ENCODE measurements at regions of chr10 and their contacts with region 1.

Region 1: DNA sequence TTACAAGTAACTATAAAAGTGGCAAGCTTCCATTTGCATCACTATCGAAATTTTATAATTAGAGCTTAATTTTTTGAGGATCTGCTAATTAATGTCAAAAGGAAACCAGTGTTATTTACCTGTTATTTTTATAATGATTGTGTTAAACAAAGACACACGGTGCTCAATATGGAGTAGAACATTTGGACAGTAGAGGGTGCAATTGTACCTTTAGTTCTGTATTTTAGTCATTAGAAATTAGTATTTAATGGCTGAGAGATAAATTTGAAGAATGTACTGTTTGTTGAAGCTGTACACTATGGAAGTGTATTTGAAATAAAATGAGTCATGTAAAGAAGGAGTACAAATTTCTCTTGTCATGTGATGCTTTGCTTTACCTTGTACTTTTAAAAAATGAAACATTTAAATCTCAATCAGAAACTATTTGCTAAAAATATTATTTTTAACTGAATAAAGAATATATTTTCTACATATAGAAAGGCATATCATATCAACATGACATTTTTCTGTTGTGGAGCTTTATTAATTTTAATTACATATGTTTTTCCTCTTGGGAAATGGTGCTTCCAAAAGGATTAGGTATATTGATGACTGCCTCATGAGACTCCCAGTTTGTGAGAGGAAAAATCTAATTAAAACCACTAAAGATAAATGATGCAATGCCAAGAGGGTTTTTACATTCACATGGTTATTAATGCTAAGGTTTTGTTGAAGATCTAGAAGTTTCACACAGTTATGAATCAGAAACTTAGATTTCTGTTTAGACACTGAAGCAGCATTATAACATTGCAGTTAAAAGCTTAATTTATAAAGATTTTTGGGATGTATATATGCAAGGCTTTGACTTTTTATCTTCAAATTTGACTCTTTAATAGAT is 10.4 kb upstream of the PRKG1 start:
- DNase-seq: peak; percentile 23
- H3K4me3 ChIP-seq: no peak overlapping the region
- CTCF ChIP-seq: peak; percentile 45

Region 2: DNA sequence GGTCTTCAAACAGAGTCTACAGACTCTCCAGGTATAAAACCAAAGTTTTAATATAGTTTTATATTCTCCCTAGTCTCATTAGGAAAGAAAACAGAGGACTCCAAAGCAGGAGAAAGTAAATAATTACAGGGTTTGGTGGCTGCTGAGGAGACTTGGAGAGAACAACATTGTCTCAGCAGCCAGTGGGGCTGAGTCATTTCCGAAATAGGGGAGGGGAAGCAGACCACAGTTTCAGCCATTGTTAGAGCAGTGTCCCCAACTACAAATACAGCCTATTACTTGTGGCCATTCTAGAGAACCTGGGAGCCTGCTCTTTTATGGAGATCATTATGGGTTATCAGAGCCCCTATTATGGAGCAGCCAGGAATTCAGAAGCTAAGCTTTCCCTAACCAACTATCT is 134.2 kb before region 1 on chr10:
- CTCF ChIA-PET with region 1: no interaction called
- POLR2A ChIA-PET with region 1: no interaction called
- DNase-seq: no peak
- H3K4me3 ChIP-seq: no peak overlapping the region
- CTCF ChIP-seq: no peak

Region 3: DNA sequence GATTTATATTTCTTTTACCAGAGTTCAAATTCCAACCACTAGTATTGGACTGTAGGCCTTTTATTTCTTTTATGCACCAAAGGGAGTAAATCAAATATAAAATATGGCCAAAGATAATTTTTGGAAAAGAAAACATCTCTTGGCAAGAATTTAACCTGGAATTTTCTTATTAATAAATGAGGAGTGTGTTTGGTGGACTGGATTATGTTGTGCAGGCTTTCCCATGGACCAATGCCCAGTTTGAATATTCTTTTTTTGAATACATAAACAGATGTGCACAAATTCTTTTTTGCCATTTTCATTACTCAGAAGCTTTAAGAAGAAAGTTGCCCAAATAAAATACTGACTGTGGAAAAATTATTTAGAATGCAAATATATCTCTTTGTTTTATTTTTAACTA is 11.7 kb before region 1 on chr10:
- CTCF ChIA-PET with region 1: interaction called, 37 read pairs
- POLR2A ChIA-PET with region 1: no interaction called
- DNase-seq: no peak
- H3K4me3 ChIP-seq: no peak overlapping the region
- CTCF ChIP-seq: no peak

Region 4: GRCh38 chr10:51196508-51197175 is 132.7 kb after region 1 on chr10:
- CTCF ChIA-PET with region 1: no interaction called
- POLR2A ChIA-PET with region 1: no interaction called
- DNase-seq: no peak
- H3K4me3 ChIP-seq: no peak overlapping the region
- CTCF ChIP-seq: no peak

Region 5: DNA sequence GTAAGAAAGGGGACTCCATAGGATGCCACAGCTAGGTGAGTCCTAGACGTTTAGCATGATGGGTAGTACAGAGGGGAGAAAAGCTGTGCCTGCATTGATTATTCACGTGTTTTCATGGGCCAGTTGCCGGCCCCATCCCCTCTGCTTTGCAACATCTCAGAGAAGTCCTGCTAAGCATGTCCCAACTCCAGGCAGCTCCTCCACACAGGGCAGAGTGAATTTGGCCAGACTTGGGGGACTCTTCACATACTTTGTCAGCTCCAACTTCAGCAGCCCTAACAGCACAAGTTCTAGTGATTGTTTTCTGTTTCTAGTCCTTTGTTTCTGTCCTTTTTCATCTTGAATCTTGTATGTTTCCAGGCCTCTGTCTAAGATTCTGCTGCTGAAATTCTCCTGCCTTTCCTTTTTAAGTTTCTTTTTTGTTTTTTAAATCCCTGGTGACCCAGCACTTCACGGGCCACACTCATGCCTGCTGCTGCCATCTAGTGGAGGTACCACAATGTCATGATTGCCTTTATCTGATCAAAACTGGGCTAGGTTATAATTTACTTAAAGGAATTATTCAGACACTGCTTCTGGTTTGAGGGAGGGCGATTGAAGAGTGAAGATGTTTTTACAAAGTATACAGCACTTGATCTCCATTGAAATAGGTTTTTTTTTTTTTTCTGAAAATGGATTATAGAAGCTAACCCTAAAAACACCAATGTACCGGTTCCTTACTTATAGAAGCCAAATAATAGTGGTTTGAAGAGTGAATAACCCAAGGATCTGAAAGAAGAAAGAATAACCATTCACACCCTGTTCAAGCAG is 358.6 kb after region 1 on chr10:
- CTCF ChIA-PET with region 1: interaction called, 62 read pairs
- POLR2A ChIA-PET with region 1: no interaction called
- DNase-seq: peak; percentile 19
- H3K4me3 ChIP-seq: no peak overlapping the region
- CTCF ChIP-seq: peak; percentile 73

Region 6: DNA sequence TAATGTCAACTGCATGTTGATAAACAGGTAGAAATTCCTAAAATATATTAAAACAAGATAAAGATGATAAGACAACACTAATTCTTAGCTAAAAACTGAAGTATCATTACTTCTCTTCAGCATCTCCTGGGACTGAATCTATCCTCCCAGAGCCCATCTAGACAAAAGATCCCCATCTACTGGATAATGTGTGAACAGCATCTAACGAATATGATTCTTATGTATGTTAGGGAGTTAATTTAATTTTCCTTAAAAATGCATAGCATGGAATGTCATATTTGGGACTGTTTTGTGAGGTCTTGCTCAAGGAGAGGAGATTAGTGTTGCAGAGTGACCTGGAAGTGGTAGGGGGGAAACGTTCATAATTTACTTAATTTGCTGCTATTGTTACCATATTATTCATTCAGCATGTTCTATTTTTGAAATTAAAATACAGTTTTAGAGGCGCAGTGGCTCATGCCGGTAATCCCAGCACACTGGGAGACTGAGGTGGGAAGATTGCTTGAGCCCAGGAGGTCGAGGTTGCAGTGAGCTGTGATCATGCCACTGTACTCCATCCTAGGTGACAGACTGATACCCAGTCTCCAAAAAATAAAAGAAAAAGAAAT is 940.5 kb after region 1 on chr10:
- CTCF ChIA-PET with region 1: interaction called, 22 read pairs
- POLR2A ChIA-PET with region 1: no interaction called
- DNase-seq: no peak
- H3K4me3 ChIP-seq: no peak overlapping the region
- CTCF ChIP-seq: peak; percentile 47

Measured in AG04449 (cell line).